K562 (cell line): ENCODE measurements at regions of chr7 and their contacts with region 1.

Region 1: DNA sequence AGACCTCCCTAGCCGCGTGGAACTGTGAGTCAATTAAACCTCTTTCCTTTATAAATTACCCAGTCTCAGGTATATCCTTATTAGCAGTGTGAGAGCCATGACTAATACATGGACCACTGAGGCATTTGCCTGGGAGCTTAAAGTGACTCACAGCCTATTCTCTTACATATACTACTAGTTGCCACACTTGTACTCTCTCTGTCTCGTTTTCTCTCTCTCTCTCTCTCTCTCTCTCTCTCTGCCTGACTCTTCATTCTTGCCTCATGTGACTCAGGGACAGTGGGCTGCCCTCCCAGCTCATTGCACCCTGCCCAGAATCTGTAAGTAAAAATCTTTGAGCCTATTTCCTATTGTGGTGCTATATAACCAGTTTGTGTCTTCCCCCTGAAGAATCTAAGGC is 238.5 kb upstream of the MAGI2 start:
- DNase-seq: no peak
- ATAC-seq: no peak
- H3K4me3 ChIP-seq: no peak overlapping the region
- H3K27ac ChIP-seq: no peak overlapping the region
- H3K4me1 ChIP-seq: no peaks in the 10 kb centered on the region
- H3K27me3 ChIP-seq: no peaks in the 10 kb centered on the region
- CTCF ChIP-seq: no peak
- EP300 ChIP-seq: no peak
- POLR2A ChIP-seq: no peak
- RAD21 ChIP-seq: no peak

Region 2: DNA sequence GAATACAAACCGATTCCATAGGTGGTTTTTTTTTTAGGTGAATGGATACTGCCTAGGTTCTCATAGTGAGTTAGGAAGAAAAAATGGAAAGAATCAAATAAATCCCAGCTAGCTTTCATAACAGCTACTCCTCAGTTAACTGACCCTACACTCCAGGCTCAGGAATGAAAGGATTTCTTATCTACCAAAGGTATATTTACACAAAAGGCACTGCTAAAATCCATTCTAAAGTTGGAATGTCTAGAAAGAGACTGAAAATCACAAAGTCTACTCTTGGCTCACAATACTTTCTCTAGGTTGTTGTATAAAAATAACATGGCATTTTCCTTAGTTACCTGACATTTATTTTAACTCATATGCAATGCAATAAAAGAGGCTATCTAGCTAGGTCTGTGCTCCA is 613.7 kb before region 1 on chr7:
- CTCF ChIA-PET with region 1: no interaction called
- POLR2A ChIA-PET with region 1: no interaction called
- in situ Hi-C with region 1: no loop called
- intact Hi-C with region 1: no loop called
- DNase-seq: no peak
- ATAC-seq: no peak
- H3K4me3 ChIP-seq: no peak overlapping the region
- H3K27ac ChIP-seq: no peak overlapping the region
- H3K4me1 ChIP-seq: no peaks in the 10 kb centered on the region
- H3K27me3 ChIP-seq: no peaks in the 10 kb centered on the region
- CTCF ChIP-seq: no peak
- EP300 ChIP-seq: no peak
- POLR2A ChIP-seq: no peak
- RAD21 ChIP-seq: no peak

Region 3: GRCh38 chr7:79636849-79637248 is 55.2 kb before region 1 on chr7:
- CTCF ChIA-PET with region 1: no interaction called
- POLR2A ChIA-PET with region 1: no interaction called
- in situ Hi-C with region 1: no loop called
- intact Hi-C with region 1: loop called (anchors 10 kb)
- DNase-seq: no peak
- ATAC-seq: no peak
- H3K4me3 ChIP-seq: no peak overlapping the region
- H3K27ac ChIP-seq: no peak overlapping the region
- H3K4me1 ChIP-seq: no peaks in the 10 kb centered on the region
- H3K27me3 ChIP-seq: no peaks in the 10 kb centered on the region
- CTCF ChIP-seq: no peak
- EP300 ChIP-seq: no peak
- POLR2A ChIP-seq: no peak
- RAD21 ChIP-seq: no peak